HepG2 (cell line): ENCODE measurements at regions of chr12 and their contacts with region 1.

Region 1: GRCh38 chr12:39764944-39765560 is 145.4 kb upstream of the ABCD2 start:
- DNase-seq: peak; percentile 12
- ATAC-seq: peak; percentile 67
- H3K4me3 ChIP-seq: no peak overlapping the region
- H3K27ac ChIP-seq: no peak overlapping the region
- H3K4me1 ChIP-seq: no peaks in the 10 kb centered on the region
- H3K27me3 ChIP-seq: no peaks in the 10 kb centered on the region
- CTCF ChIP-seq: peak; percentile 67
- EP300 ChIP-seq: no peak
- POLR2A ChIP-seq: no peak
- RAD21 ChIP-seq: peak; percentile 54; the same call in 1 of the 2 replicates

Region 2: DNA sequence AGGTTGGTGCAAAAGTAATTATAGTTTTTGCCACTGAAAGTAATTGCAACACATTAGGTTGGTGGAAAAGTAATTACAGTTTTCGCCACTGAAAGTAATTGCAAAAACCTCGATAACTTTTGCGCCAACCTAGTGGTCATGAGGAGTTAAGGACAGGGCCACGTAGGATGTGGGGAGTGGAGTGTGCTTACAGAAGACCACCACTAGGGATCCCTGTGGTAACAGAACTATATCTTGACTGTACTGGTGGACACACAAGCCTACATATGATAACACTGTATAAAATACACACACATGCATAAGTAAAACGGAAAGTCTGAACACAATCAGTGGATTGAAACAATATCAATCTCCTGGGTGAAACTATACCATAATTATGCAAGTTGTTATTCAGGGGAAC is 42.0 kb after region 1 on chr12:
- CTCF ChIA-PET with region 1: no interaction called
- POLR2A ChIA-PET with region 1: no interaction called
- in situ Hi-C with region 1: no loop called
- intact Hi-C with region 1: loop called (anchors 2 kb)
- DNase-seq: peak; percentile 45
- ATAC-seq: peak; percentile 99
- H3K4me3 ChIP-seq: no peak overlapping the region
- H3K27ac ChIP-seq: no peak overlapping the region
- H3K4me1 ChIP-seq: no peaks in the 10 kb centered on the region
- H3K27me3 ChIP-seq: no peaks in the 10 kb centered on the region
- CTCF ChIP-seq: peak; percentile 54
- EP300 ChIP-seq: no peak
- POLR2A ChIP-seq: no peak
- RAD21 ChIP-seq: no peak

Region 3: GRCh38 chr12:39958377-39958776 is 193.3 kb after region 1 on chr12:
- CTCF ChIA-PET with region 1: interaction called, 5 read pairs
- POLR2A ChIA-PET with region 1: no interaction called
- in situ Hi-C with region 1: no loop called
- intact Hi-C with region 1: loop called (anchors 1 kb)
- DNase-seq: peak; percentile 9
- ATAC-seq: peak; percentile 61; the same call in 2 of the 3 replicates
- H3K4me3 ChIP-seq: no peak overlapping the region
- H3K27ac ChIP-seq: no peak overlapping the region
- H3K4me1 ChIP-seq: no peaks in the 10 kb centered on the region
- H3K27me3 ChIP-seq: no peaks in the 10 kb centered on the region
- CTCF ChIP-seq: peak; percentile 48
- EP300 ChIP-seq: no peak
- POLR2A ChIP-seq: no peak
- RAD21 ChIP-seq: no peak

Region 4: GRCh38 chr12:39990122-39991101 is 225.4 kb after region 1 on chr12:
- CTCF ChIA-PET with region 1: interaction called, 17 read pairs
- POLR2A ChIA-PET with region 1: no interaction called
- in situ Hi-C with region 1: loop called (anchors 10 kb)
- intact Hi-C with region 1: no loop called
- DNase-seq: peak; percentile 28
- ATAC-seq: peak; percentile 93
- H3K4me3 ChIP-seq: no peak overlapping the region
- H3K27ac ChIP-seq: no peak overlapping the region
- H3K4me1 ChIP-seq: no peaks in the 10 kb centered on the region
- H3K27me3 ChIP-seq: no peaks in the 10 kb centered on the region
- CTCF ChIP-seq: peak; percentile 72
- EP300 ChIP-seq: no peak
- POLR2A ChIP-seq: no peak
- RAD21 ChIP-seq: peak; percentile 45; the same call in 1 of the 2 replicates

Region 5: GRCh38 chr12:40010899-40011774 is 246.1 kb after region 1 on chr12:
- CTCF ChIA-PET with region 1: no interaction called
- POLR2A ChIA-PET with region 1: no interaction called
- in situ Hi-C with region 1: no loop called
- intact Hi-C with region 1: loop called (anchors 5 kb)
- DNase-seq: peak; percentile 65
- ATAC-seq: peak; percentile 97
- H3K4me3 ChIP-seq: no peak overlapping the region
- H3K27ac ChIP-seq: no peak overlapping the region
- H3K4me1 ChIP-seq: no peaks in the 10 kb centered on the region
- H3K27me3 ChIP-seq: no peaks in the 10 kb centered on the region
- CTCF ChIP-seq: peak; percentile 63
- EP300 ChIP-seq: no peak
- POLR2A ChIP-seq: no peak
- RAD21 ChIP-seq: no peak